AG04449 (cell line): ENCODE measurements at regions of chr18 and their contacts with region 1.

Region 1: GRCh38 chr18:8389391-8390340 is 219.6 kb upstream of the RAB12 start:
- DNase-seq: peak; percentile 17
- H3K4me3 ChIP-seq: no peak overlapping the region
- CTCF ChIP-seq: peak; percentile 85

Region 2: DNA sequence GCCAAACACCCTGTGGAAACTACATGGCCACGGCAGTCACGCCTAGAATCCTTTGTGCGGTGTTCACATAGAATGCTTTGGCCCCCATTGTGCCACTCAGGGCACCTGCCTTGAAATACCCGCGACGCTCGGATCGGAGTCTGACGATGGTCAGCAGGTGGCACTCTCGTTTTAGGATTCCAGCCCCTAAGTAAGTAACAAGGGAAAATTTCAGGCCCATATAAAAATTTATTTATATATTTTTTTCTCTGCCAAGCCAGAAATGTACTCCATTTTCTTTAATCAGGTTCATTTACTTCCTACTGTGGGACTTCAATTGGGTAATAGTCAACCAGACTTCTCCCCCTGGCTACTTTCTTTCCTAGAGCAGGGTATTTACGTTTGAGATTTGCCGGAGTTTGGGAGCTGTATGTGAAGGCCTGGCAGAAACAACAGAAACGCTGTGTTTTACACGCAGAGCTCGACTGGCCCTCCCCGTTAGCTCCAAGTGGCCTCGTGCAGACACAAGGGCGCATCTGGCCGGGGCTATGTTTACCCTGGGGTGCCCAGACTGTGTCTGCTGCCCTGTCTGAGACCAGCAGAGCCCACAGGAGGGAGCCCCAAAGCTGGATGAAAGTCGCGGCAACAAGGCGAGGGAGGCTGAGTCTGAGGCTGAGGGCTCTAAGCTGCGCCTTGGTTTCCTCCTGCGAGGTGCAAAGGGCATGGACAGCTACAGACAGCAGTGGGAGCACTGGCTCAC is 1117.2 kb before region 1 on chr18:
- CTCF ChIA-PET with region 1: interaction called, 10 read pairs
- POLR2A ChIA-PET with region 1: no interaction called
- DNase-seq: no peak
- H3K4me3 ChIP-seq: no peak overlapping the region
- CTCF ChIP-seq: peak; percentile 46

Region 3: DNA sequence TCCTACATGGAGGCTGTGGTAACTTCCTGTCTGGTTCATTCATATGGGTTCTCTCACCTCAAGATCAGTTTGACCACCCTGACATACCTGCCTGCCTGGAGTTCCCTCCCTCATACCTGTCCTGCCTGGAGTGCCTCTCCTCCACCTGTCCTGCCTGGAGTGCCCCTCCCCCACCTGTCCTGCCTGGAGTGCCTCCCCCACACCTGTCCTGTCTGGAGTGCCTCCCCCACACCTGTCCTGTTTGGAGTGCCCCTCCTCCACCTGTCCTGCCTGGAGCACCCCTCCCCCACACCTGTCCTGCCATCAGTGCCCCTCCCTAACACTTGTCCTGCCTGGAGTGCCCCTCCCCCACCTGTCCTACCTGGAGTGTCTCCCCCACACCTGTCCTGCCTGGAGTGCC is 360.6 kb before region 1 on chr18:
- CTCF ChIA-PET with region 1: no interaction called
- POLR2A ChIA-PET with region 1: no interaction called
- DNase-seq: no peak
- H3K4me3 ChIP-seq: no peak overlapping the region
- CTCF ChIP-seq: no peak

Region 4: DNA sequence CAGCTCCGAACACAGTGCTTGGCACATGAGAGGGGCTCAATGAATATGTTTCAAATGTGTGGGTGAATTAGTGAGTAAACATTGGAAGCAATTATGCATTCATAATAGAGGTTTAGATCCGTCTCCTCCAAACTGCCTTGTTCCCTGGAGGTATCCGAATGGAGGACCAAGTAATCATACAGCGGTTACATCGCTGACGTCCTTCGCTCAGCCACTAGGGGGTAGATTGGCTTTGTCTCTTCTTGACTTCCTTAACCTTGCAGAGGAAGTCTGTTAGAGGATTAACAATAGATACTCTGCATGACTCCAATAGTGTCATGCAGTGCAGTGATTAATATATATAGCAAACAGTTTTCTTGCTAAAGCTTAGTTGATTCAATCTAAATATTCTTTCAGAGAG is 305.5 kb before region 1 on chr18:
- CTCF ChIA-PET with region 1: interaction called, 41 read pairs
- POLR2A ChIA-PET with region 1: no interaction called
- DNase-seq: no peak
- H3K4me3 ChIP-seq: no peak overlapping the region
- CTCF ChIP-seq: peak; percentile 57

Region 5: DNA sequence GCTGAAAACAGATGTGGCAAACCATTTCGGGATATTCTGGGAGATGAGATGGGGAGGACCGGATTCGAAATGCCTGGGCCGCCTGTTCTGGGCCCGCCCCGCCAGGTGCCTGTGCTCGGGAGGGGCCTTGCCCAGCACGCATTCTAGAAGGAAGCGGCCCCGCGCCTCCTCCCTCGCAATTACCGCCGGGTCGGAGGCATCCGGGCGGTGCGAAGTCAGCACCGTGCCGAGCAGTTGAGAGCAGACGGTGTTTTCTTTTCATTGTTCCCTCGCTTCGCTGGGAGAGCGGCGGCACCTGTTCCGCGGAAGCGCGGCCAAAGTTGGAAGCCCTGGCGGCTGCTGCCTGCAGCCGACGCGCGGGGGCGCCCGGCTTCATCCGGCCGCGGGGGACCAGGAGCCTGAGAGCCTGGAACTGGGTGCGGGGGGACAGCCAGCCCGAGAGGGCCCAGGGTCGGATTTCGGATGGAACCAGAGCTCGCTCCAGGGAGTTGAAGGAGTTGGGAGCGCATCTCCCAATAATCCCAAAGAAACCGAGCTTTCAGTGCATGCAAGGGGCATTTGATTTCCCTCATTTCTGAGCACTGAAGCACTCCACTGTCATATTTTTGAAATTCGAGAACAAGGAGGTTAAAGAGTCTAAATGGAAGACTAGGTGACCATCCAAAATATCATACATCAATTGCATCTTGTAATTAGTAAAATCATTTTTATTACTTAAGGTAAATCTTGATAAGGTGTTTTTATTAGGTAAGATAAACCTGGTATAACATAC is 22.3 kb before region 1 on chr18:
- CTCF ChIA-PET with region 1: interaction called, 19 read pairs
- POLR2A ChIA-PET with region 1: no interaction called
- DNase-seq: no peak
- H3K4me3 ChIP-seq: peak overlapping the region; percentile 34
- CTCF ChIP-seq: peak; percentile 59

Region 6: DNA sequence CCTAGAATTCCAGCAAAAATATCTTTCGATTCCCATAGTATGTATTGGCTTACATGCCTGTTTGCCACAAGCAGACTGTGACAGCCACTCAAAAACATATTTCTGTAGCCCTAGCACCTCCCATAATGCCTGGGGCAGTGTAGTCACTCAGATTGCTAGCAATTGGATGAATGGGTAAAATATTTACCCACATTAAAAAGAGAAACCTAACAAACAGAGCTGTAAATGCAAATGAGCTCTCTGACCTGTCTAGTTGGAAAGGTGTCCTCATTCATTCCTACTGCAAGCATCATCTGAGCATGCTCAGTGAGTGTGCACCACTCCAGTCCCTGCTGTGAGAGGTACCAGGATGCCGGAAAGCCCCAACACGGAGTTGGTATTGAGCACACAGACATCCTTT is 14.4 kb before region 1 on chr18:
- CTCF ChIA-PET with region 1: interaction called, 28 read pairs
- POLR2A ChIA-PET with region 1: no interaction called
- DNase-seq: no peak
- H3K4me3 ChIP-seq: no peak overlapping the region
- CTCF ChIP-seq: no peak

Region 7: GRCh38 chr18:8400296-8400695 is 10.6 kb after region 1 on chr18:
- CTCF ChIA-PET with region 1: interaction called, 12 read pairs
- POLR2A ChIA-PET with region 1: no interaction called
- DNase-seq: no peak
- H3K4me3 ChIP-seq: no peak overlapping the region
- CTCF ChIP-seq: no peak